ENCODE measurements at regions of chr1 and their contacts with region 1.

Region 1: DNA sequence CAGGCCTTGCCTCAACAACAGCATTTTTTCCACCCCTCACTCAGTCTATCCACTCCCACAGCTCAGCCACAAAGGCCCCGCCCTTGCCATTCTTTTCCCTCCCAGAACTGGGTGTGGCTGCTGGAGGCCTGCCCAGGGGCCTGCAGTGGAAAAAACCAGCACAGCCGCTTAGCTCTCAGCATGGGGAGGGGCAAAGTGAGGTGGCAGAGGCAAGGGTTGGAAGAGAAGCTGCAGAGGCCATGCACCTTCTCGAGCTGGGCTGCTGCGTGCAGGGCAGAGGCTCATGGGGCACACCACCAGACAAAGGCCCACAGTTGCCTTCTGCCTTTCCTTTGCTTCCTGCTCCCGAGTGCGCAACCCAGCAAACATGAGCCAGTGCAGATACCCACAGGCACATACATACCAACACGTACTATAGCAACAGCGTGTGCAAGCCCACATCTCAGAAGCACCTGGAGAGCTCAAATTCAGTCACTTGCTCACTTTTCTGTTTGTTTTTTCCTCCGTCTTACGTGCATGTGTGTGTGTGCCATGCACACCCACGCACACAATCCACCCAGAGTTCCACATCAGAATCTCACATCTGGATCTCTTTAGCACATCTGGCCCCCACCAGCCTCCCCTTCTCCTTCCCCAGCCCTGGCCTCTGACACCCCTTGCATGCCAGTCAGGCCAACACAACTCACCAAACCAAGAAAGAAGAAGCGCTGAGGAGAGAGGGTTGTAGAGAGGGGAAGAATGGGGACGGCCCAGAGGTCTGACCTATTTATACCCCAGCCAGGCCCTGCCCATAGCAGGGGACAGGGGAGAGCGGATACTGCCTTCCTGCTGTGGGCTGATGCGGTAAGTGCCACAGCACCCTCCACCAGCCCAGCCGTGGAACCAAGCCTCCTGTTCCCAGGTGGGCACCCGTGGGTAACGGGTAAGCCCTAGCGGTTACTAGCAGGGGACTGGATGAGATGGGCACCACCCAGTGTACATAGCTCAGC is at the start of gene S100A4:
- DNase-seq: peak; percentile 95
- H3K4me3 Mint-ChIP-seq: peak within 1 kb of the TSS; percentile 88
- H3K27ac Mint-ChIP-seq: peak within 1 kb of the TSS; percentile 97
- H3K4me1 Mint-ChIP-seq: peaks cover 70% of the 10 kb centered on the region
- H3K27me3 Mint-ChIP-seq: no peaks in the 10 kb centered on the region
- total RNA-seq, gene S100A4: 175 and 181 TPM in 2 replicates

Region 2: DNA sequence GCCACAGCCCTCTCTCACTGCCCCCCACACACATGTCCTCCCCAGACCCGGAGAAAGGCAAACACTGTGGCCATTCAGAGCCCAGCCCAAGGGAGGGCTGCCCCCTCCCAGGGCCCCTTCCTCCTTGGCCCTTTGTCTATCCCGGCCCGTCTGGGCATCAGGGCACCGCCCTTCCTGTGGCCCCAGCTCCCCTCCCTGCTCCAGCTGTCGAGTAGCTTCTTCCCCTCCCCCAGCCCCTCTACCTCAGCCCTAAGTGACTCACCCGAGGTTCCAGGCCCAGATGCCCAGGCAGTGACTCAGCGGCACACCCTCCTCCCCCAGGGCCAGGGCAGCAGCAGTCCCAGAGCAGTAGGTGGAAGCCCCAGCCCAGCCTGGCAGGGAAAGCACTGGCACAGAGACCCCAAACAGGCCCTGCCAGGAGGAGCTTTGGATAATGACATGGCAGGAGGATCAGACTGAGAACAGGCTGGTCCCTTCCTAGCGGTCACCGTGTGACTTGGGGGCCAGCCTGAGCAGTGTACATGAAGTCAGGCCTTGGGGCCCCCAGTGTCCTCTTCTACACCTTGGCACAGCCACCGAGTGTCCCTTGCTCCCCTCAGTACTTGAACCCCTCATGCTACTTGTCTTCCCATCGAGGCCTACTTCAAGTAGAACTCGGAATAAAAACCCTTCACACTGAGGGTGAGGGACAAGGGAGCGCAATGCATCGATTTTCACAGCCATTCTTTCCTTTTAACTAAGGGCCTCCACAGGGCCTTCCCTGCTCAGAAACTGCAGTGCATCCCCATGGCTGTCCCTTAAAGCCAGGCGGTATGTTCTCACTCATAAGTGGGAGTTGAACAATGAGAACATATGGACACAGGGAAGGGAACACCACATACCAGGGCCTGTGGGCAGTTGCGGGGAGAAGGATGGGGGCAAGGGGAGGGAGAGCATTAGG is 21.3 kb after region 1 on chr1:
- intact Hi-C with region 1: loop called (anchors 1 kb)
- DNase-seq: peak; percentile 75
- H3K4me3 Mint-ChIP-seq: peak overlapping the region; percentile 22
- H3K27ac Mint-ChIP-seq: peak overlapping the region; percentile 100
- H3K4me1 Mint-ChIP-seq: peaks cover 37% of the 10 kb centered on the region
- H3K27me3 Mint-ChIP-seq: no peaks in the 10 kb centered on the region

Region 3: DNA sequence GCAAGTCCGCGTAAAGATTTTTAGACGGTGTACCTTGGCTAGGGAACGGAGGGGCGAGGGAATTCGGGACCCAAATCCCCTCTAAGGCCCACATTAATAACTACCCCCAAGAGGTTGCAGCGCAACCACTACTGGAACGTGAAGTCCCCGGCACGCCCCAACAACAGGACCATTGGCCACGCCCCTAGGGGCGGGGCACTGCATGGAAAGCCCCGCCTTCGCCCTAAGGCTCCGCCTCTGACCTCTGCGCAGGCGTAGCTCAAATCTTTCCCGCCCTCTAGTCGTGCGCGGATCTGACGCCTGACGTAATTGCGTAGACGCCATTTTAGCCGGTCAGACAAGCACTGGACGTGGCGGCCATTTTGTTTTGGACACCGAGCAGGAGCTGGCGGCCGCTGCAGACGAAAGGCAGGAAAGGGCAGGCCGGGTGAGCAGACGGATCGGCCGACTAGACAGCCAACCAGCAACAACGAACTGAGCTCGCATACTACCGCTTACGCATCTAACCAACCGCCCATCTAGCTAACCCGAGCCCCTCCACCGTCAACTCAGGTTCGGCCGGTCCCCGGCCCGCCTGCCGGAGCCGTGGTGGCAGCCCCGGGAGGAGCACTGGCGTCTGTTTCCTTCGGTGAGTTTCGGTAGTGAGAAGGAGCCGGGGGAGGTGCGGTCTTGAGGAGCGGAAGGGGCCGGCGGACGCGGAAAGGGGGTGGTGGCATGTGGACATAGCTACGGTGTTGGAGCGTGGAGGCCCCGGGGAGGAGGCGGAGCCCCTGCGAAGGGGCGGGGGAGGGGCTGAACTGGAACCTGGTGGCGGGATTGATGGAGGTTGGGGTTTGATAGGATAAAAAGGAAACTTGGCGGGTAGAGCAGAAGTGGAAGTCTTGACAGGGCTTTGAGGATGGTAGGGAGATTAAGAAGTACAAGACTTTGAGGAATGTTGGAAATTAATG is 88.6 kb after region 1 on chr1 and contains the start of gene CHTOP:
- intact Hi-C with region 1: loop called (anchors 2 kb)
- DNase-seq: peak; percentile 96
- H3K4me3 Mint-ChIP-seq: peak within 1 kb of the TSS; percentile 96
- H3K27ac Mint-ChIP-seq: peak within 1 kb of the TSS; percentile 100
- H3K4me1 Mint-ChIP-seq: peaks cover 28% of the 10 kb centered on the region
- H3K27me3 Mint-ChIP-seq: no peaks in the 10 kb centered on the region
- total RNA-seq, gene CHTOP: 94.6 and 98.7 TPM in 2 replicates

Region 4: GRCh38 chr1:153967082-153968000 is 422.0 kb after region 1 on chr1 and contains the start of gene CREB3L4:
- intact Hi-C with region 1: loop called (anchors 10 kb)
- DNase-seq: peak; percentile 84
- H3K4me3 Mint-ChIP-seq: peak within 1 kb of the TSS; percentile 86
- H3K27ac Mint-ChIP-seq: peak within 1 kb of the TSS; percentile 98
- H3K4me1 Mint-ChIP-seq: peaks cover 47% of the 10 kb centered on the region
- H3K27me3 Mint-ChIP-seq: no peaks in the 10 kb centered on the region
- total RNA-seq, gene CREB3L4: 12.5 TPM in 2 replicates